ENCODE measurements at regions of chr9 and their contacts with region 1.

Region 1: GRCh38 chr9:20518735-20519134 is 103.6 kb downstream of the MLLT3 start:
- DNase-seq: no peak
- ATAC-seq: no peak

Region 2: DNA sequence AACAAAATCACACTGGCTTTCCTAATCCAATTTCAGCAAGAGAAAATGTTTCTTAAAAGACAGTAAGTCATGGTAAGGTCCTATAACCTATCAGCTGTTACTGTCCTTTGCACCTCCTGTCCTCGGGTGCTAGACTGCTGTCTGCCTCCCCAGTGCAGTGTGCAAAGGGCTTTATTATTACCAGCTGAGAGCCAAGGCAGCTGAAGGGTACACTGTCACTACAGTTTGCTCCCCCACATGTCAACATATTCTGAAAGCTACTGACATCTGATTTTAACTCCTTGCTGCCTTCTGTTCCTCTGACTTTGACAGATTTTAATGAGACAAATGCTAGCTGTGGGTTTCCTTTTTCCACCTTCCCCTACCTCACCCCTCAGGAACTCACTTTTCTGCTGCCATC is 340.5 kb before region 1 on chr9:
- intact Hi-C with region 1: no loop called
- DNase-seq: no peak
- ATAC-seq: no peak

Region 3: GRCh38 chr9:20552874-20553575 is 34.3 kb after region 1 on chr9:
- intact Hi-C with region 1: loop called (anchors 1 kb)
- DNase-seq: no peak
- ATAC-seq: no peak

Region 4: DNA sequence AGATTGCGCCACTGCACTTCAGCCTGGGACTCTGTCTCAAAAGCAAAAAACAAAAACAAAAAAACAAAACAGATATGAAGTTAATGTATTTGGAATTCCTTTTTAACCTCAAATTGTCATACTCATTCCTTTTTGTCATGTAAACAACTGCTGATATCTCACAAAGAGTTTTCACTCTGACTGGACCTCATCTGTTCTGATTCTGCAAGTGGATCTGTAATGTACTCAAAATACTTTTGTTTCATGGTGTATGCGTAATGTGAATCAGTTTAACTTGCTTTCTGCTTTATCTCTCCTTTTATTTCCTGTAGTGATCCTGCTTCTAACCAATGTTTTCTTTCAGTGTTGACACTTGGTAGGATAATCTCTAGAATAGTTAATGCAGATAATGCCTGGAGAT is 272.0 kb after region 1 on chr9:
- intact Hi-C with region 1: no loop called
- DNase-seq: no peak
- ATAC-seq: no peak

Measured in Right ventricle myocardium inferior (tissue), 1 donor.